ENCODE measurements at regions of chr15 and their contacts with region 1.

Region 1: GRCh38 chr15:81274931-81275707 is 48.8 kb downstream of the STARD5 start:
- DNase-seq: peak; percentile 52 to 97 (median 82)

Region 2: DNA sequence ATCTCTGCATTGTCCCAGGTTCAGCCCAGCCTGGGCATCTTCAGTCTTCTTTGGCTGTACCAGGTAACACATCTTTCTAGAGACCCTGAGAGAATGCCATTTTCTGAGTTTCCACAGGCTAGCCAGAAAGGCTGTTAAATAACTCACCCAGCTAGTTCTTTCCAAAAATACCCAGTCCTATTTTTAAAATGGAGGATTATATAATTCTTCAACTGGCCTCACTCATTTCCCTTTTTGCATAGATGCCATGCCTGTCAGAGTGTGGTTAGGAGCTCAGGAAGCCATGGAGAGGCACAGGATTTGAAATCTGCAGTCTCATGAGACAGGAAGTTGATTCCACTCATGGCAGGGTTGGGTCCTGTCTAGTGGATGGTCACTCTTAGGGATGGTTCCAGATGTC is 456.1 kb before region 1 on chr15:
- intact Hi-C with region 1: no loop called
- DNase-seq: no peak

Region 3: GRCh38 chr15:80934761-80935221 is 340.3 kb before region 1 on chr15:
- intact Hi-C with region 1: no loop called
- DNase-seq: peak in 3 of 10 donors; percentile 11 to 88 (median 44)

Region 4: GRCh38 chr15:81056304-81056703 is 218.8 kb before region 1 on chr15:
- intact Hi-C with region 1: no loop called
- DNase-seq: no peak

Region 5: GRCh38 chr15:81293728-81294515 is 18.8 kb after region 1 on chr15:
- intact Hi-C with region 1: no loop called
- DNase-seq: no peak

Region 6: GRCh38 chr15:81336568-81336967 is 61.4 kb after region 1 on chr15:
- intact Hi-C with region 1: loop called (anchors 2 kb)
- DNase-seq: no peak

Region 7: DNA sequence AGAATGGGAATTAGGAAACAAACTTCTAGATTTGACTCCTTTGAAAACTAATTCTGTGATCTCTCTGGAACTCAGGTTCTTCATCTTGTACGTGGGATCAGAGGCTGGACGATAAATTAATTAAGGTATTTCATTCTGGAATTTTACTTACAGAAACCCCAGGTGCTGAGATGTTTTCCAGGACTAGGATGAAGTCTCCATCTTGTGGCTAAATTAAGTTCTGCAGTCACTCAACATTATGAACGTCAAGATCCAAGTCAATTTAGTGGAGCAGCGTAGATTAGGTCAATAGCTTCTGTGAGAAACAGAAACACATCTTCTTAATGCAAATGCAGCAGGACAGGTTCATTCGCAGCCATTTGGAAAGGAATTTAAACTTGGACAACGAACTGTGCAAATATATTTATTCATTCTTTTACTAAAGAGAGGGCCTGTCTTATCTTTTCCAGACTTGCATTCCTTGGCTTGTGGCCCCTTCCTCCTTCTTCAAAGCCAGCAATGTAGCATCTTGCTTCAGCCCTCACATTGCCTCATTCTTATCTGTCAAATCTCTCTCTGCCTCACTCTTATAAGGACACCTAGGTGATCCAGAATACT is 125.6 kb after region 1 on chr15:
- intact Hi-C with region 1: loop called (anchors 1 kb)
- DNase-seq: no peak